GM12878 (cell line): ENCODE measurements at regions of chr11 and their contacts with region 1.

Region 1: GRCh38 chr11:86617502-86617901 is 54.9 kb downstream of the ME3 start:
- DNase-seq: no peak
- ATAC-seq: no peak
- H3K4me3 ChIP-seq: no peak overlapping the region
- H3K27ac ChIP-seq: no peak overlapping the region
- H3K4me1 ChIP-seq: no peaks in the 10 kb centered on the region
- H3K27me3 ChIP-seq: no peaks in the 10 kb centered on the region
- CTCF ChIP-seq: no peak
- EP300 ChIP-seq: no peak
- POLR2A ChIP-seq: no peak
- RAD21 ChIP-seq: no peak

Region 2: GRCh38 chr11:86669424-86669823 is 51.9 kb after region 1 on chr11:
- CTCF ChIA-PET with region 1: no interaction called
- POLR2A ChIA-PET with region 1: no interaction called
- RAD21 ChIA-PET with region 1: no interaction called
- SMC1A ChIA-PET with region 1: no interaction called
- in situ Hi-C with region 1: loop called (anchors 5 kb)
- intact Hi-C with region 1: no loop called
- DNase-seq: no peak
- ATAC-seq: no peak
- H3K4me3 ChIP-seq: no peak overlapping the region
- H3K27ac ChIP-seq: no peak overlapping the region
- H3K4me1 ChIP-seq: no peaks in the 10 kb centered on the region
- H3K27me3 ChIP-seq: peaks cover 8 to 10% of the 10 kb centered on the region in 2 experiments; a peak in 3 of 4 replicates
- CTCF ChIP-seq: no peak
- EP300 ChIP-seq: no peak
- POLR2A ChIP-seq: no peak
- RAD21 ChIP-seq: no peak

Region 3: DNA sequence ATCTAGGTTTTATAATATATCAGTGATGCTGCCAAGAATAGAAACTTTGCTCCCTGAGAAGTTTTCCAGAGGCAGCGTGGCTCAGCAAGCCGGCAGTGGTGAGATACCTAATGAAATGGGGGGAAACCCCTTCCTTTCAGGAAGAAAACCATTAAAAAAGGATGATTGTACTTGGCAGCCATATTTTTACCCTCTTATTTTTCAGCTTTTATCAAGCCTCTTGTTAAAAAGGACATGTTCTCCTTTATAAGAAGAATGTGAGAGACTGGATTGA is 63.9 kb after region 1 on chr11:
- CTCF ChIA-PET with region 1: no interaction called
- POLR2A ChIA-PET with region 1: no interaction called
- RAD21 ChIA-PET with region 1: no interaction called
- SMC1A ChIA-PET with region 1: no interaction called
- in situ Hi-C with region 1: no loop called
- intact Hi-C with region 1: no loop called
- DNase-seq: no peak
- ATAC-seq: no peak
- H3K4me3 ChIP-seq: no peak overlapping the region
- H3K27ac ChIP-seq: no peak overlapping the region
- H3K4me1 ChIP-seq: no peaks in the 10 kb centered on the region
- H3K27me3 ChIP-seq: peaks cover 2% of the 10 kb centered on the region in 2 experiments; a peak in 2 of 4 replicates
- CTCF ChIP-seq: no peak
- EP300 ChIP-seq: no peak
- POLR2A ChIP-seq: no peak
- RAD21 ChIP-seq: no peak

Region 4: GRCh38 chr11:86818466-86819192 is 201.1 kb after region 1 on chr11:
- CTCF ChIA-PET with region 1: no interaction called
- POLR2A ChIA-PET with region 1: no interaction called
- RAD21 ChIA-PET with region 1: no interaction called
- SMC1A ChIA-PET with region 1: no interaction called
- in situ Hi-C with region 1: loop called (anchors 10 kb)
- intact Hi-C with region 1: no loop called
- DNase-seq: peak; percentile 7
- ATAC-seq: peak; percentile 72
- H3K4me3 ChIP-seq: no peak overlapping the region
- H3K27ac ChIP-seq: no peak overlapping the region
- H3K4me1 ChIP-seq: no peaks in the 10 kb centered on the region
- H3K27me3 ChIP-seq: no peaks in the 10 kb centered on the region; a peak in 2 of 4 replicates
- CTCF ChIP-seq: peak; percentile 50 to 73 (median 65); a peak in 5 of 6 replicates
- EP300 ChIP-seq: no peak
- POLR2A ChIP-seq: no peak
- RAD21 ChIP-seq: peak; percentile 91

Region 5: DNA sequence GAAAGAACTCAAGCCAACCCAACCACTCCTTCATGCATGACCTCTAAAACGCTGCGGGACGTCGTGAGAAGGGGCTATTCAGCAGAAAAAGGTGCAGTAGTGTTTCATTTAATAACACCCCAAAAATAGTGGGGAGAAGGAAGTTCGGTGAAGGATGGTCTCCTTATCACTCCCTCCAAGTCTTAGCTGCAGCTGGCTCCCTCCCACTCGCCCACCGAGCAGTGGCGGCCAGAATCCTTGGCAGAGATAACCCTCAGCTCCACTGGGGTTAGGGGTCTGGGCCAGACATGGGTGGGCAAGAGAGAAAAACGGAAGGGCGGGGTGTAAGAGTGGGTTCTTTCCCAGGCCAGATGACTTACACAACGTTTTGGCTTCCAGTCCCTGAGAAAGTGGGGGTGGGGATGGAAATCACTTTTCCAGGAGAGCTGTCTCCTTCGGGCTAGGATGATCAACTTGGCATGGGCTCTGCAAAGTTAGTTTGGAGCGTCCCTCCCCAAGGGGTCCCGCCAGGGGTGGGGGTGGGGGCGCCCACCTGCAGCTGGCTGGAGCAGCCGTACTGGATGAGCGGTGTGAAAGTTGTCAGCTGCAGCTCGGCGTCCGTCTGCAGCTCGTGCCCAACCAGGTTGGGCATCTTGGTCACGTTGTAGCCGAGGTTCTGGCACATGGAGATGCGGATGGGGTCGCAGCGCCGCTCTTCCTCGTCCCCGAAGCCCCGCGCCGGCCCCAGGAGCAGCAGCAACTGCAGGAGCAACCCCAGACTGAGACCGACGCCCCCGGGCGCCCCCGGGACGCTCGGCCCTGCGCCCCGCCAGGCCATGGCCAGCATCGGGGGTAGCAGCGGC is 337.0 kb after region 1 on chr11:
- CTCF ChIA-PET with region 1: no interaction called
- POLR2A ChIA-PET with region 1: no interaction called
- RAD21 ChIA-PET with region 1: no interaction called
- SMC1A ChIA-PET with region 1: no interaction called
- in situ Hi-C with region 1: no loop called
- intact Hi-C with region 1: no loop called
- DNase-seq: no peak
- ATAC-seq: no peak
- H3K4me3 ChIP-seq: peak overlapping the region; percentile 47; the same call in 1 of the 2 replicates
- H3K27ac ChIP-seq: no peak overlapping the region
- H3K4me1 ChIP-seq: no peaks in the 10 kb centered on the region; the same call in 1 of the 2 replicates
- H3K27me3 ChIP-seq: peaks cover 3 to 9% of the 10 kb centered on the region in 2 experiments; a peak in 2 of 4 replicates
- CTCF ChIP-seq: no peak
- EP300 ChIP-seq: no peak
- POLR2A ChIP-seq: no peak
- RAD21 ChIP-seq: no peak